Caco-2 (cell line): ENCODE measurements at regions of chr3 and their contacts with region 1.

Region 1: GRCh38 chr3:61561374-61562041 is at the start of gene PTPRG:
- DNase-seq: peak; percentile 87 to 88
- H3K4me3 ChIP-seq: peak within 1 kb of the TSS; percentile 87
- H3K4me3 Mint-ChIP-seq: peak within 1 kb of the TSS; percentile 86
- H3K27ac Mint-ChIP-seq: peak within 1 kb of the TSS; percentile 85
- H3K4me1 ChIP-seq: peaks cover 8% of the 10 kb centered on the region
- H3K4me1 Mint-ChIP-seq: peaks cover 6% of the 10 kb centered on the region
- H3K27me3 ChIP-seq: no peaks in the 10 kb centered on the region
- H3K27me3 Mint-ChIP-seq: no peaks in the 10 kb centered on the region
- CTCF ChIP-seq: no peak
- total RNA-seq, gene PTPRG: 46.4 and 46.5 TPM in 2 replicates

Region 2: DNA sequence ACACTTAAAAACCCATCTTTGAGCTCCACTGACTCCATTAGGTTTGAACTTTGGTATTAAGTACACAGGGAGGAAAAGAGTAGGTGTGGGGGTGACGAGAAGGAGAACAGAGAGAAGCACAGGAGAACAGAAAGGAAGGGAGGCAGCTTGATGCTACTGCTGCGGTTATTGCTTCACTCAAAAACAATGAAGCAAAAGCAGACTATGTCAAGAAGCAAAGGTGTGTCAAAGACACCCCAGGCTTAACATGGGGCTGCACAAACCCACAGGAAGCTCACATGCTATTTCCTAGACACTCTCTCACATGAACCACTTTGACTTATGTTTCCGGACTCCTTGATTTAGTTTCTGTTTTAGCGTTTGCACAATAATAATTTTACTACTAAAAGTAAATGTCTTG is 1550.7 kb before region 1 on chr3:
- CTCF ChIA-PET with region 1: no interaction called
- POLR2A ChIA-PET with region 1: no interaction called
- intact Hi-C with region 1: no loop called
- DNase-seq: no peak
- H3K4me3 ChIP-seq: no peak overlapping the region
- H3K4me3 Mint-ChIP-seq: no peak overlapping the region
- H3K27ac Mint-ChIP-seq: no peak overlapping the region
- H3K4me1 ChIP-seq: 0 out of 2 replicates have a peak, but pooled peaks cover 6% of the 10 kb centered on the region
- H3K4me1 Mint-ChIP-seq: no peaks in the 10 kb centered on the region
- H3K27me3 ChIP-seq: no peaks in the 10 kb centered on the region
- H3K27me3 Mint-ChIP-seq: no peaks in the 10 kb centered on the region
- CTCF ChIP-seq: no peak

Region 3: DNA sequence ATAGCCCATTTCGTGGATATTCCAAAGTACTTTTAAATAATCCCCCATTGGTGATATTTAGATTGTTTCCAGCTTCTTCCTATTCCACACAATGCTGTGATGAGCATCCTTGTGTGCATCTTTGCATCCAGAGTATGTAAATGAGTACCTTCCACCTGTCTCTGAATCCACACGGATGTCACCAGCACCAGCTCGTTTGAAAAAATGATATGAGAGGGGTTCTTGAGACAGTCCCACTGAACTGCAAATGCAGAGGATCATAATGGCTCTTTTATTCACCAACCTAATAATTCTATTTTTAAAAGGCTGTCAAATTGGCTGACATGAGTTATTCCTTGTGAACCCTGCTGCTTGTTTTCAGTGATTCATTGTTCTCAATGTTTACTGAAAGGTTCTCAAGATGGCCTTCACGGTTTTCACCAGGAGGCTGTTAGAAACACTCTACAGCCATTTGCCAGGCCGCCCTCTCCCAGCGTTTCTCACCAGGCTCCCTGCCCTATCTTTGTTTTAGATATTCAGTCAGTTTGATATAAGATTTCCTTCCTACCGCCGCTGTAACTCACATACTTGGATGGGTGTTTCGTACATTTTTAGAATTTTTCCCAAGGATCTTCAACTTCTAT is 96.9 kb before region 1 on chr3:
- CTCF ChIA-PET with region 1: no interaction called
- POLR2A ChIA-PET with region 1: no interaction called
- intact Hi-C with region 1: no loop called
- DNase-seq: no peak
- H3K4me3 ChIP-seq: no peak overlapping the region
- H3K4me3 Mint-ChIP-seq: no peak overlapping the region
- H3K27ac Mint-ChIP-seq: no peak overlapping the region
- H3K4me1 ChIP-seq: no peaks in the 10 kb centered on the region
- H3K4me1 Mint-ChIP-seq: no peaks in the 10 kb centered on the region
- H3K27me3 ChIP-seq: no peaks in the 10 kb centered on the region
- H3K27me3 Mint-ChIP-seq: no peaks in the 10 kb centered on the region
- CTCF ChIP-seq: no peak

Region 4: GRCh38 chr3:61627768-61628185 is 66.3 kb after region 1 on chr3:
- CTCF ChIA-PET with region 1: no interaction called
- POLR2A ChIA-PET with region 1: no interaction called
- intact Hi-C with region 1: loop called (anchors 2 kb)
- DNase-seq: peak; percentile 53 to 63
- H3K4me3 ChIP-seq: no peak overlapping the region
- H3K4me3 Mint-ChIP-seq: no peak overlapping the region
- H3K27ac Mint-ChIP-seq: peak overlapping the region; percentile 84
- H3K4me1 ChIP-seq: peaks cover 38% of the 10 kb centered on the region
- H3K4me1 Mint-ChIP-seq: peaks cover 41% of the 10 kb centered on the region
- H3K27me3 ChIP-seq: no peaks in the 10 kb centered on the region
- H3K27me3 Mint-ChIP-seq: no peaks in the 10 kb centered on the region
- CTCF ChIP-seq: no peak

Region 5: DNA sequence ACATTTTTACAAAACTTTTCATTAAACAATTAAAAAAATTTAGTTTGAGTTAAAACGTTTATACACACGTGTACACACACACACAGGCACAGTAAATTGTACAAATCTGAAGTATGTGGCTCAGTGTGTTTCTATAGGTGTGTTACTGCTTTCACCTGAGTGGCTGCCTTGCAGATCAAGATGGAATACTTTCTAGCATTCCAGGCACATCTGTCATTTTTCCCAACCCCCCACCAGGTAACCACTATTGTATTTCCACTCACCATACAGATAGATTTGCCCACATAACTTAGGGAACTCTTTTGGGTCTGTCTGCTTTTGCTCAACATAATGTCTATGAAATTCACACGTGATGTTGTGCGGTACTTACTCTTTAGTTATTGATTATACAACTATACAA is 140.9 kb after region 1 on chr3:
- CTCF ChIA-PET with region 1: interaction called, 4 read pairs
- POLR2A ChIA-PET with region 1: no interaction called
- intact Hi-C with region 1: loop called (anchors 2 kb)
- DNase-seq: peak; percentile 42 to 47
- H3K4me3 ChIP-seq: no peak overlapping the region
- H3K4me3 Mint-ChIP-seq: peak overlapping the region; percentile 33
- H3K27ac Mint-ChIP-seq: peak overlapping the region; percentile 87
- H3K4me1 ChIP-seq: peaks cover 46% of the 10 kb centered on the region
- H3K4me1 Mint-ChIP-seq: peaks cover 38% of the 10 kb centered on the region
- H3K27me3 ChIP-seq: no peaks in the 10 kb centered on the region
- H3K27me3 Mint-ChIP-seq: no peaks in the 10 kb centered on the region
- CTCF ChIP-seq: no peak

Region 6: GRCh38 chr3:61778145-61778494 is 216.6 kb after region 1 on chr3:
- CTCF ChIA-PET with region 1: no interaction called
- POLR2A ChIA-PET with region 1: no interaction called
- intact Hi-C with region 1: loop called (anchors 5 kb)
- DNase-seq: peak in 1 of 2 experiments; percentile 15
- H3K4me3 ChIP-seq: no peak overlapping the region
- H3K4me3 Mint-ChIP-seq: no peak overlapping the region
- H3K27ac Mint-ChIP-seq: no peak overlapping the region
- H3K4me1 ChIP-seq: peaks cover 11% of the 10 kb centered on the region; the same call in 1 of the 2 replicates
- H3K4me1 Mint-ChIP-seq: no peaks in the 10 kb centered on the region
- H3K27me3 ChIP-seq: no peaks in the 10 kb centered on the region
- H3K27me3 Mint-ChIP-seq: no peaks in the 10 kb centered on the region
- CTCF ChIP-seq: peak in 1 of 2 experiments; percentile 8

Region 7: DNA sequence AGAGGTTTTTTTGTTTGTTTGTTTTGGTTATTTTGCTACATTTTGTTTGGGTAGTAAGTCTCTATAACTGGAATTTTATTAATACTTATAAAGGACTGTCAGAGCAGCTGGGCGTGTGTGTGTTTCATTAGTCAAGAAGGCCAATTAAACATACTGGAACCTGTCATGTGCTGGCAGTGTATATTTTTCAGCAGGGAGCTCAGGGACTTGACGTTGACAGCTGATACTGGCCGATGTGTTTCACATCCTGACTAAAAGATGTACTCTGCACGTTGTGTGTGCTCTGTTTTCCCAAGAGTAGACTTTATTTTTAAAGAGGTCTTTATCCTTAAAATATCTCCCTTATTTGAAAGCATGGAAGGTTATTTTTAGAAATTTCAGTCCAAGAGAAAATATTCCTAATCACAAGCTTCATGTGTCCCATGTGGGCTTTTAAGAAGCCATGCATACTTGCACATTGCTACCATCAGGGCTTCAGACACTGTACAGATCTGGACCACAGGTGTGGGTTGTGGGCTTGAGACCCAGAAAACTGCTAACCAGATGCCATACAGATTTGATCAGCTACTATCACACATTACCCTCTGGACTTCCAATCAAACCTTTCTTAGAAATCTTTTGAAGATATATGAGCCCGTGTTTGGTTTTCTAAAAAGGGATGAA is 675.9 kb after region 1 on chr3:
- CTCF ChIA-PET with region 1: no interaction called
- POLR2A ChIA-PET with region 1: interaction called, 11 read pairs
- intact Hi-C with region 1: no loop called
- DNase-seq: no peak
- H3K4me3 ChIP-seq: no peak overlapping the region
- H3K4me3 Mint-ChIP-seq: no peak overlapping the region
- H3K27ac Mint-ChIP-seq: no peak overlapping the region
- H3K4me1 ChIP-seq: no peaks in the 10 kb centered on the region
- H3K4me1 Mint-ChIP-seq: no peaks in the 10 kb centered on the region
- H3K27me3 ChIP-seq: no peaks in the 10 kb centered on the region
- H3K27me3 Mint-ChIP-seq: no peaks in the 10 kb centered on the region
- CTCF ChIP-seq: no peak